Tibial artery (tissue), 4 donors: ENCODE measurements at regions of chr3 and their contacts with region 1.

Region 1: DNA sequence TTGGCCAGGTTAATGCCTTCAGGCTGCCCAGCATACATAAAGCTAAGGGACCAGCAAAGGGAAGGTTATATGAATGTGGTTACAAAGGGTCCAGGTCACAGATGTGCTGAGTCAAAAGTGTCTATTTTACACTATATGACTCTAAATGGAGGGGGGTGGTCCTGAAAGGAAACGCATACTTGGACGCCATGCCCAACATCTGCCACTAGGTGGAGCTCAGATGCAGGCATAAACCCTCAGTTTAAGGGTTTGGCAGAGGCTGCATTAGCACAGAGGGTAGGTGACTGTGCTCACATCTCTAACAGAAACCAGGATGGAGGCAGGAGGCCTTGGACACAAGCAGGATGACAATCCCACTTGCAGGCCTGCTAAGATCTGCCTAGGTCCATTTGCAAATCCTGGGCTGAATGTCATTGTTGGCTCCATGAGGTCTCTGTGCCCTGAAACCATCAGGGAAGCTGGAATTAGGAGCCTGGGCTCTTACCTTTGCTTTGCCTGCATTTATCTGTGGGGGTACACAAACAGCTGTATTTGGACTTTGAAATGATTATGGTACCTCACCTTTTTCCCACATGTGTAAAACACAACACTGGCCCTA is 55.8 kb downstream of the ZNF621 start:
- DNase-seq: peak; percentile 60 to 77
- H3K4me3 ChIP-seq: no peak overlapping the region
- H3K27ac ChIP-seq: no peak overlapping the region
- H3K4me1 ChIP-seq: peaks cover 0 to 26% (median 12%) of the 10 kb centered on the region in 4 donors
- H3K27me3 ChIP-seq: peaks cover 0 to 6% of the 10 kb centered on the region in 2 donors
- CTCF ChIP-seq: peak; percentile 91 to 92

Region 2: DNA sequence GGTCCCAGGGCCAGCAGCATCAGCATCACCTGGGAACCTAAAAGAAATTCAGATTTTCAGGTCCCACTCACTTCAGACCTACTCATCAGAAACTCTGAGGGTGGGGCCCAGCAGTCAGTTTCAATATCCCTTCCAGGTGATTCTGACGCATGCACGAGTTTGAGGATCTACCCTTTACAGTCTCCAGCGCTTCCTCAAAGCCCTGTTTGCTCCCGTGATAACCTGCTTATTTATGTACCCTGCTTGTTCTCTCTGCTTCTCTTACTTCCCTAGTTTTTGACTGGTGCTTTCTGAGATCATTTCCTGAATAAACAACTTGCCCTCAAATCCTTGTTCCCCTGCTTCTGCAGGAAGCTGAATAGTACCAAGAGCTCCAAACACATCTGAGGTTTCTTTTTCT is 189.5 kb after region 1 on chr3:
- intact Hi-C with region 1: loop called (anchors 10 kb)
- DNase-seq: peak in 1 of 2 donors; percentile 41
- H3K4me3 ChIP-seq: no peak overlapping the region
- H3K27ac ChIP-seq: peak overlapping the region; percentile 37 to 61
- H3K4me1 ChIP-seq: peaks cover 0 to 46% (median 37%) of the 10 kb centered on the region in 4 donors
- H3K27me3 ChIP-seq: no peaks in the 10 kb centered on the region
- CTCF ChIP-seq: no peak

Region 3: GRCh38 chr3:41198950-41199865 is 618.6 kb after region 1 on chr3 and contains the start of gene CTNNB1:
- intact Hi-C with region 1: loop called (anchors 10 kb)
- DNase-seq: peak; percentile 90 to 96
- H3K4me3 ChIP-seq: peak within 1 kb of the TSS; percentile 80 to 92
- H3K27ac ChIP-seq: peak within 1 kb of the TSS; percentile 96 to 99
- H3K4me1 ChIP-seq: peaks cover 0 to 31% (median 14%) of the 10 kb centered on the region in 4 donors
- H3K27me3 ChIP-seq: no peaks in the 10 kb centered on the region
- CTCF ChIP-seq: peak in 1 of 2 experiments; percentile 19

Region 4: GRCh38 chr3:41716471-41716870 is 1135.9 kb after region 1 on chr3:
- intact Hi-C with region 1: loop called (anchors 5 kb)
- DNase-seq: no peak
- H3K4me3 ChIP-seq: no peak overlapping the region
- H3K27ac ChIP-seq: no peak overlapping the region
- H3K4me1 ChIP-seq: no peaks in the 10 kb centered on the region
- H3K27me3 ChIP-seq: no peaks in the 10 kb centered on the region
- CTCF ChIP-seq: peak; percentile 32 to 37

Region 5: GRCh38 chr3:41881233-41881821 is 1300.7 kb after region 1 on chr3:
- intact Hi-C with region 1: loop called (anchors 1 kb)
- DNase-seq: no peak
- H3K4me3 ChIP-seq: no peak overlapping the region
- H3K27ac ChIP-seq: no peak overlapping the region
- H3K4me1 ChIP-seq: no peaks in the 10 kb centered on the region
- H3K27me3 ChIP-seq: no peaks in the 10 kb centered on the region
- CTCF ChIP-seq: peak; percentile 56 to 77